Upper lobe of right lung (tissue), 1 donor: ENCODE measurements at regions of chr11 and their contacts with region 1.

Region 1: DNA sequence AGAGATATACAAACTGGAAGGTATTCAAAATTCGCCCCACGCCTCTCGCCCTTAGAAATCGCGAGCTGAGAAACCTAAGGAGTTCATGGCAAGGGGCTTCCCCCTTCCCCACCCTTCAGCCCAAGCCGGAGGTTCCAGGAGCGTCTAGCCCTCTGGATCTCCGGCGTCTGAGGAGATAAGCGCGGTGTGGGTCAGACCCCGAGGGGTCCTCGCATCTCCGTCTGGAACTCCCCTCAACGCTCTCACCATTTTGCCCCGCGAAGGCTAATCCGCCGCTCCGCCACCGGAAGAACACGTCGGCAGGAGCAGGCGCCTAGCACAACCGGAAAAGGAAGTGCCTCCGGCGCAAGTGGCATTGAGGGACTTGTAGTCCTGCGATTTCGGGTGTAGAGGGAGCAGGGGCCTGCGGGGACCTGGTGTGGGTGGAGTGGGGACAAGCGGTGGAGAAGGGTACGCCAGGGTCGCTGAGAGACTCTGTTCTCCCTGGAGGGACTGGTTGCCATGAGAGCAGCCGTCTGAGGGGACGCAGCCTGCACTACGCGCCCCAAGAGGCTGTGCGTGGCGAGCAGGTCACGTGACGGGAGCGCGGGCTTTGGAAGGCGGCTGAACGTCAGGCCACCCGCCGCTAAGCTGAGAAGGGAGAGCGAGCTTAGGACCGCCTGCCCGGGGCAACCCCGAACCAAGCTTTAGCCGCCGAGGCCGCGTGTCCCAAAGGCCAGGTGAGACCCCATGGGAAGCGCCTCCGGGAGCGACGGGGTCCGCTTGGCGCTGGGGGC is at the starts of genes FEN1 and TMEM258:
- DNase-seq: peak; percentile 96
- ATAC-seq: peak; percentile 91
- H3K4me3 ChIP-seq: peak within 1 kb of the TSS; percentile 85
- H3K27ac ChIP-seq: peak within 1 kb of the TSS; percentile 99
- H3K4me1 ChIP-seq: peaks cover 18% of the 10 kb centered on the region
- H3K27me3 ChIP-seq: no peaks in the 10 kb centered on the region
- CTCF ChIP-seq: no peak
- total RNA-seq, gene FEN1: 4.9 TPM
- total RNA-seq, gene TMEM258: 94.0 TPM

Region 2: DNA sequence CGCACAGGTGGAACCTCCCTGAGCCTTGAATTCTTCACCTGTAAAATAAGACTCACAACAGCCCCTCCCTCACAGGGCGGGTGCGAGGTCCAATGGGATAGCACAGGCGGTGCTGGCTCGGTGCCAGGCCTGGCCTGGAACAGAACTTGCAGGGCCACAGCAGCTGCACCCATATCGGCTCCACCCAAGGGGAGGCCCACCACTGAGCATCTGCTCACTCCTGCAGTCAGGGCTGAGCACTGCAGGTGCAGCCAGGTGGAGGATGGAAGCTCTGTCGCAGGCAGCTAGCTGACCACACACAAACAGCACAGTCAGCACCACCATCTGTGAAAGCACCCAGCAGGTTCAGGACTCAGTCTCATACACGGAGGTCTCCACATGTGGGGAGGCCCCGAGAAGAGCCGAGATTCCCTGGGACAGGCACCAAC is 650.9 kb before region 1 on chr11:
- intact Hi-C with region 1: no loop called
- DNase-seq: peak; percentile 64
- ATAC-seq: peak; percentile 40
- H3K4me3 ChIP-seq: no peak overlapping the region
- H3K27ac ChIP-seq: no peak overlapping the region
- H3K4me1 ChIP-seq: peaks cover 20% of the 10 kb centered on the region
- H3K27me3 ChIP-seq: no peaks in the 10 kb centered on the region
- CTCF ChIP-seq: no peak

Region 3: GRCh38 chr11:62116458-62116857 is 324.0 kb after region 1 on chr11:
- intact Hi-C with region 1: loop called (anchors 10 kb)
- DNase-seq: no peak
- ATAC-seq: no peak
- H3K4me3 ChIP-seq: no peak overlapping the region
- H3K27ac ChIP-seq: no peak overlapping the region
- H3K4me1 ChIP-seq: no peaks in the 10 kb centered on the region
- H3K27me3 ChIP-seq: no peaks in the 10 kb centered on the region
- CTCF ChIP-seq: no peak